MCF 10A (cell line): ENCODE measurements at regions of chr16 and their contacts with region 1.

Region 1: GRCh38 chr16:57235128-57236021 is 9.7 kb upstream of the ARL2BP start:
- DNase-seq: peak; percentile 82
- H3K4me3 Mint-ChIP-seq: no peak overlapping the region
- H3K27ac Mint-ChIP-seq: peak overlapping the region; percentile 68
- H3K4me1 Mint-ChIP-seq: peaks cover 5% of the 10 kb centered on the region
- H3K27me3 Mint-ChIP-seq: no peaks in the 10 kb centered on the region
- CTCF ChIP-seq: no peak

Region 2: DNA sequence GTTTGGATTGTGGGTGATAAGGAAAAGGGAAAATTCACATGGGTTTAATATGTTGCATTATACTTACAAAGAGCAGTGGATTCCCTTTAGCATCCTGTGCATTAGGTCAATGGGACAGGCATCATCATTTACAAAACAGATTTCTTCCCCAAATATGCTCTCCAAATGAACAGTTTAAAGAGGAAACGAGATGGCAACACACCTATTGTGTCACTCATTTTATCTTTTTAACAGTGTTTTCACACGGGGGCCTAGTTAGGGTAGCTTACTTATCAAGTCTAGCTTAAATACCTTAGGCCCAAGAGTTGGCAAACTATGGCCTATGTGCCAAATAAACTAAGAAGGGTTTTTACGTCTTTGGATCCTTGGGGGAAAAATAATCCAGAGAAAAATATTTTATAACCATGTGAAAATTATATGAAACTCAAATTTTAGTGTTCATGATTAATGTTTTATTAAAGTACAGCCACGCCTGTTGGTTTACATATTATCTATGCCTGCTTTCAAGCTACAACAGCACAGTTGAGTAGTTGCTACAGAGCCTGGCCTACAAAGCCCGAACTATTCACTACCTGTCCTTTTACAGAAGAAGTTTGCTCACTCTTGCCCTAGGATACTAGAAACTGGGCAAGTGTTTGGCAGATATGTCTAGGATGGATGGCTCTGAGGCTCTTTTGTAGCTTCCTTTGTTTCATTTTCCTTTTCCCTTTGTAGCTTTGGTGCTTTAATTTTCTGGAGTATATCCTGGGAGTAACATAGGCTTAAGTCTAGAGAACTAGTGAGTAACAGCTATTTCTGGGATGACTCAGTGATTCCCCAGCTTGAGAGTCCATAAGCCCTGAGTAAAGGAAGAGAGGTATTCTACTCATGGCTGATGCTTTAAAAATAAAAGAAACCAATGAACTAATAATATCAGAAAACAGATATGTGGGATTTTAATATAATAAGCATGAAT is 493.1 kb before region 1 on chr16:
- CTCF ChIA-PET with region 1: no interaction called
- POLR2A ChIA-PET with region 1: no interaction called
- intact Hi-C with region 1: no loop called
- DNase-seq: peak; percentile 72
- H3K4me3 Mint-ChIP-seq: peak overlapping the region; percentile 50
- H3K27ac Mint-ChIP-seq: peak overlapping the region; percentile 79
- H3K4me1 Mint-ChIP-seq: peaks cover 12% of the 10 kb centered on the region
- H3K27me3 Mint-ChIP-seq: no peaks in the 10 kb centered on the region
- CTCF ChIP-seq: no peak

Region 3: GRCh38 chr16:57223057-57223456 is 12.3 kb before region 1 on chr16:
- CTCF ChIA-PET with region 1: interaction called, 4 read pairs
- POLR2A ChIA-PET with region 1: interaction called, 12 read pairs
- intact Hi-C with region 1: no loop called
- DNase-seq: no peak
- H3K4me3 Mint-ChIP-seq: no peak overlapping the region
- H3K27ac Mint-ChIP-seq: no peak overlapping the region
- H3K4me1 Mint-ChIP-seq: no peaks in the 10 kb centered on the region
- H3K27me3 Mint-ChIP-seq: no peaks in the 10 kb centered on the region
- CTCF ChIP-seq: no peak

Region 4: DNA sequence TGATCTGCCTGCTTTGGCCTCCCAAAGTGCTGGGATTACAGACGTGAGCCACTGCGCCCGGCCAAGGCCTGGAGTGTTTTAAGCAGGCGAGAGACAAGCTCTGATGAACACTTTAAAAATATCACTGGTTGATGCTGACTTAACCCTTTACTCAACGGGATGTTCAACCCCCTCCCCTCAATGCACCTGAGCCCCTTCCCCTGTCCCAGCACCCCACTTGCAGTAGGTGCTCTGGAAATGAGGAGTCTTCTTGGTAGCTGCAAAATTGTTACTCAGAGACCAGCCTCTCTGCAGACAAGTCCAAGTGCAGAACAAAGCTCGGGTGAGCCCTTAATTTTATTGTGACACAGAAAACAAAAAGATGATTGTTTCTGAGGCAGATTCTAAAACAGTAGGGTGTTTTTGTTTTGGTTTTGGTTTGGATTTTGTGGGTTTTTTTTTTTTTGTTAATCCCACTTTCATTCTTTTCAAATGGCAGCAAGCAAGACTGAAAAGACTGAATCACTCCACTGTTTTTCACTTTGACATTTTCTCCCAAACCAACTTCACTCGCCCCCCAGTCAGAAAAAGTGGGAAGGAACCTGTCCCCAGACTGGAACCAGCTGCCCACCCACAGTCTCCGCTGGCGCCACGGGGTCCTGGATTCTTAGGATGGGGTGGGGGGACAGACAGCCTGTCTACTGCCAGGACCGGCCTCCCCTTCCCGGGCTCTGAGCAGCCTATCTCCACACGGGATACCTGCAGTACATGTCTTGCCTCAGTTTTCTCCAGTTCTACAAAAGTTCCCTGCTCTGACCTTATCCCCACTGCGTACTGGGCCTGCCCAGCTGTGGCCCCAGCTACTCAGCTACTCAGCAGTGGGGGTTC is 54.2 kb after region 1 on chr16:
- CTCF ChIA-PET with region 1: no interaction called
- POLR2A ChIA-PET with region 1: no interaction called
- intact Hi-C with region 1: no loop called
- DNase-seq: no peak
- H3K4me3 Mint-ChIP-seq: no peak overlapping the region
- H3K27ac Mint-ChIP-seq: no peak overlapping the region
- H3K4me1 Mint-ChIP-seq: peaks cover 5% of the 10 kb centered on the region
- H3K27me3 Mint-ChIP-seq: no peaks in the 10 kb centered on the region
- CTCF ChIP-seq: no peak